Testis (tissue), 5 donors: ENCODE measurements at regions of chr11 and their contacts with region 1.

Region 1: DNA sequence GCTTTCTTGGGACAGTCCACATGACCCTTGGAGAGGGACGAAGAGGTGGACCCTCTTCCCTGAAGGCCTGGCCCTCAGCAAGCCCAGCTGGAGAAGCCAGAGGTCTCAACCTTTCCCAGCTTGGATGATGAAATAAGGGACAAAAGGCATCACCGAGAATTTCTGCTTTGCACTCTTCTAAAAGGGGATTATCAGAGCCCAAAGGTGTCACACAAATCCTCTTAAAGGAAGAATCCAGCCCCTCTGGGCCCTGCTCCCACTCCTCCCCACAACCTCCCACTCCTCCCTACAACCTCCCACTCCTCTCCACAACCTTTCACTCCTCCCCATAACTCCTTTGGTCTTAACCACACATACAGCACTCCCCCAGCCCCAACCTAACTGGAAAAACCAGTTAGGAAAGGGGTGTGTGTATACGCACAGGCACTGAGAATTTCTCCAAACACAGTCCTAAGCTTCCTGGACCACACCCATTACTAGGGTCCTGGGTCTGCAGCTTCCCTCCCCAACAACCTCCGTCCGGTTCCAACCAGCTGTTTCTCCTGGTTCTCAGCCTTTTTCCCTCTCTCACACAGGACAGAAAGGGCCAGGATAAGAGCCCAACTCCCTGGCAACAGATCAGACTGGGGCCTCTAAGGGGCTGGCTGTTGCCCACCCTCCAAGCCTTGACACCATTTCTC is 38.5 kb downstream of the RPL27A start:
- DNase-seq: no peak
- H3K4me3 ChIP-seq: no peak overlapping the region
- H3K27ac ChIP-seq: peak overlapping the region; percentile 67 to 85
- H3K4me1 ChIP-seq: peaks cover 78% of the 10 kb centered on the region
- H3K27me3 ChIP-seq: no peaks in the 10 kb centered on the region
- CTCF ChIP-seq: no peak
- POLR2A ChIP-seq: no peak

Region 2: DNA sequence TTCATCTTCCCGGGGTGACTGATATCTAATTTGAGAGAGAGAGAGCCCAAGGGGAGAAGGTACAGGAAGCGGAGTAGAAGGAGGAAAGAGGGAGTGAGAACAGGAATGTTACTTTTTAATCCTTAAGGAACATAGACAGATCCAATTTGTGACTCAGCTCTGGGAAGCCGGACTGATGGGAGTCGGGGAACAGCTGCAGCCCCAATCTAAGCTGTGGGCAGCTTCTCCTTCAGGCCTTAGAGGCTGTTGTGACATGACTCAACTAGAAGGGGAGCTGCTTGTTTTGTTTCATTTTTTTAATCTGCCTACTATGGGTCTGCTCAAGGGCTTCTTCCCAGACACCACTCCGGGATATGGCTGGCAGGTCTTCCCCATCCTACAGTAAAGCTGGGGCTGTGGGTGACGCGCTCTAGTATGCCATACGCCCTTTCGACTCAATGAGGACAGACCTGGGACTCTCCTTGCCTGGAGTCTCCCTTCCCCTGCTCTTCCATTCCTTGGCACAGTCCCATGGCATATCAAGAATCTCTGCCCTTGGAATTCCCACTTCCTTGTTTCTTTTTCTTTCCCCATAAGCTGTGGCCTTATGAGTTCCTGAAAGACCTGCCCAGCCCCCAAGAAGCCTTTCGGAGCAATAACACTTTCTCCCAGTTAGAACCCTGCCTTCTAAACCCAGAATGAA is 86.5 kb after region 1 on chr11:
- intact Hi-C with region 1: loop called (anchors 10 kb)
- DNase-seq: peak; percentile 72
- H3K4me3 ChIP-seq: peak overlapping the region in 1 of 2 donors; percentile 69
- H3K27ac ChIP-seq: peak overlapping the region; percentile 81 to 90
- H3K4me1 ChIP-seq: peaks cover 64% of the 10 kb centered on the region
- H3K27me3 ChIP-seq: no peaks in the 10 kb centered on the region
- CTCF ChIP-seq: no peak
- POLR2A ChIP-seq: no peak